PC-9 (cell line): ENCODE measurements at regions of chr5 and their contacts with region 1.

Region 1: DNA sequence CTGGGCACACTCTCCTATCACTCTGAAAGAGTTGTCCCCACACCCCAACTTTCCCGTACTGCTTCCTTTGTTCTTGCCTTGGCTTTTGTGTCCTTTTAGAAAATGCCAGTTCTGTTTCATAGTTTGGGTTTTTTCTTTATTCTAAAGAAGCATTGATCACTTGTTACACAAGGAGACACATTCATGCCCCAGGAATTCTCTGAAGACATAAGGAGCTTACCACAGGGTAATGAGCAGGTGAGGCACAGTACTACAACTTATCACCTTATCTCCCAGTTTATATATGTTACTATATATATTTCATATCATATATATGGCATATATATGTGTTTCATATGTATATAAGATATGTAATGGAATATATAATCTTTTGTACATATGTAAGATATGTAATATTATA is 6.5 kb upstream of the SSBP2 start:
- DNase-seq: peak in 1 of 2 experiments; percentile 51
- H3K4me3 ChIP-seq: no peak overlapping the region
- H3K27ac ChIP-seq: no peak overlapping the region
- H3K4me1 ChIP-seq: peaks cover 25% of the 10 kb centered on the region
- H3K27me3 ChIP-seq: no peaks in the 10 kb centered on the region
- CTCF ChIP-seq: no peak

Region 2: DNA sequence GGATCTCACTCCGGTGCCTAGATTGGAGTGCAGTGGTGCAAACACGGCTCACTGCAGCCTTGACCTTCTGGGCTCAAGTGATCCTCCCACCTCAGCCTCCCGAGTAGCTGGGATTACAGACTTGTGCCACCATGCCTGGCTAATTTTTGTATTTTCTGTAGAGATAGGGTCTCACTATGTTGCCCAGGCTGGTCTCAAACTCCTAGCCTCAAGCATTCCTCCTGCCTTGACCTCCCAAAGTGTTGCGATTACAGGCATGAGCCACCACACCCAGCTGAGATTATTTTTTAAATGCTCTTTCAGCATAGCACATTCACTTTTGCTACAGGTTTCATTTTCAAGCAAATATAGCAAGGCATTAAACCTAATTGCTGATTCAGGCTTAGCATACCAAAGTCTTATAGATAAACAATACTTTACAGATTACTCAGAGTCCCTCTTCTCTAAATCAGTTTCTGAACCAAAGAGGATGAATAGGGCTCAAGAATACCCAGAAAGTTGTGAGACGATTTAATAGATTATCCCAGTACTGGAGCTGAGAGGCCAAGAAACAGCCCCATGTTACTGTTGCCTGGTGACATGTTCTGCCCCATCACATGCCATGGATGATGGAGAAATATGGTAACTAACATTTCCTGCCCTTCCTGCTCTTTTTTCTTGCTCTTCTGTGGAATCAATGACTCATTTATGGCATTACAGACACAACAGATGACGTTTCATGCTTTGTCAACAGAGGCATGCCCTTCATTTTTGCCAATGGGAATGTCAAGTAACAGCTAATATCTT is 11.5 kb after region 1 on chr5:
- CTCF ChIA-PET with region 1: no interaction called
- POLR2A ChIA-PET with region 1: interaction called, 10 read pairs
- intact Hi-C with region 1: no loop called
- DNase-seq: peak; percentile 47 to 90
- H3K4me3 ChIP-seq: no peak overlapping the region
- H3K27ac ChIP-seq: peak overlapping the region; percentile 71
- H3K4me1 ChIP-seq: peaks cover 30% of the 10 kb centered on the region
- H3K27me3 ChIP-seq: no peaks in the 10 kb centered on the region
- CTCF ChIP-seq: no peak